Posterior cingulate gyrus (tissue), 11 donors: ENCODE measurements at regions of chr1 and their contacts with region 1.

Region 1: DNA sequence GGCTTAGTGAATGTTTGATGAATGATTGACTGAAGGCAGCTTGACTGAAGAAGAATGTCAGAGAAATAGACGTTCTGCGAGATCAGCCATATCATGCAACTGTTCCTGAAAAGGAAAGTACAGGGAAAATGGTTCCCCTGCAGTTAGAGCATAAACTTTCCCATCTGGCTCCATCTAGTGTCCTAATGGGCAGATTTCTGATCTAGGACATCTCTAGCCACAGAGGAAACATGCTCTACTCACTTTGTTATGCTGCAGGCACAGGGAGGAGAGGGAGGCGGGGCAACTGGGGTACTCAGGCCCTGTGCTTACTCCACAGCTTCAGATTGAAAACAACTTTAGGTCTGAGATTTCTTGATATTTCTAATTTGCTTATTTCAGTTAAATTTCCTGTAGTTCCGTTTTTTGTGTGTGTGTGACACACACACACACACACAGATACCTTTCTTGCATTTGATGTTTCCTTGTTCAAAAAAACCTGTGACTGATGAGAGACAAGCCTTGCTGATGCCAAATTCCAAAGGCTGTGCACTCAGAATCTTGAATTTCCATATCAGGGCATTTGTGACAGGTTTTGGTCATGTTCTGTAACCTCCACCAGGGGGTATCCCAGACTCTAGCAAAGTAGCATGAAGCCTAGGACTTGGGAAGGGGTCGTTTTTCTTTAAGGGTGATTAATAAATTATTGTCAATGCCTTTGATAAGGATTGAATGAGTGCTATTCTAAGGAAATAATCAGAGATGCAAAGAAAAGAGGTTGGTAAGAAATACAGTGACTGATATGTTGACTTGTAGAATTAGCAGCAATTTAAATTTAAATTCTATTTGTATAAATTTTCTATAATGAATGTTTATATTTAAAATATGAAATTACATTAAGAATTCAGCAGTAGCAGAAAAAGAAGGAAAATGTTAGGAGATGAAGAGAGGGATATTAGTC is 139.7 kb upstream of the BEND5 start:
- DNase-seq: peak in 2 of 10 donors; percentile 8 to 83

Region 2: DNA sequence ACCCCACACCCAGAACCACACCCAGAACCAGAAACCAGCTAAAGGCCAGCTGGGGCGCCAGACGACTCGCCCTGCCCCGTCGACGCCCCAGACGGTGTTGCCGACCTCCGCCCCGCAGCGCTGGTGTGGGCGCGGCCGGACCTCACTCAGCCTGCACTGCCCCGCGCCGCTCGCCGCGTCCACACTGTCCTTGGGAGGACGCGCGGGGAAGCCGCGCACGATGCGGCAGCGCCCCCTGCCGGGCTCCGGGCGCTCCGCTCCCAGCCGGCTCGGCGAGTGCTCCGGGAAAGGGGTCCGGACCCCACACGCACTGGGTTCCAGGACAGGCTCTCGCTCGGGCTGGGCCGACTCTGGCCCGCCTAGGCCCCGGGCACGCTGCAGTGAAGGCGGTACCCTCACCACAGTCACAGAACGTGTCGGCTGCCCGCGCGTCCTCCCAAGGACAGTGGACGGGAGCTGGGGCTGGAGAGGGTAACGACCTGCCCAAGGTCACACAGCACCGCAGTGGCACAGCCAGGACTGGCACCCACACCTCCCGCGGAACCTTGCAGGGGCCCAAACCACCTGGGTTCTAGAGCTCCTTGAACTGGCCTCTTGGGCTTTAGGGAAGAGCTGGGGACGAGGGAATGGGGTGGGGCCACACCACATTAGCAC is 1416.7 kb after region 1 on chr1:
- intact Hi-C with region 1: loop called (anchors 5 kb)
- DNase-seq: peak; percentile 29 to 95 (median 61)